ENCODE measurements at regions of chr15 and their contacts with region 1.

Region 1: DNA sequence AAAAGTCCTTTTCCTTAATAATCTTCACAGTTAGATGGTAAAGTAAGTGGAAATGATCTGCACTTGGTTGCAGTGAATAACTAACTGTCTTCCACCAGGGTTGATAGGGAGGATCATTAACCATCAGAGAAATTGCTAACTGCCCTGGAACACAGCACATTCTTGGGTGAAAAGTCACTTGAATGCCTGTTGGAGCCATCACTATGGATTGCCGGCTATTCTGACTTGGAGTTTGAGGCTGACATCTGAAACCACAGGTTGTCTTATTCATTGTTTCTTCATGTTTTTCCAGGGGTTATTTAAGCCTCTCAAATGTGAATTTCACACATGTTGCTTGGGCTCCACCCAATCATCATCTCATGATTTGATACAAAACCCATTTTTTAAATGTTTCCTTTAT is 901.4 kb downstream of the MCTP2 start:
- DNase-seq: peak; percentile 82
- H3K4me3 ChIP-seq: no peak overlapping the region
- H3K27ac ChIP-seq: no peak overlapping the region
- H3K4me1 ChIP-seq: peaks cover 10% of the 10 kb centered on the region
- H3K27me3 ChIP-seq: no peaks in the 10 kb centered on the region
- CTCF ChIP-seq: no peak

Region 2: DNA sequence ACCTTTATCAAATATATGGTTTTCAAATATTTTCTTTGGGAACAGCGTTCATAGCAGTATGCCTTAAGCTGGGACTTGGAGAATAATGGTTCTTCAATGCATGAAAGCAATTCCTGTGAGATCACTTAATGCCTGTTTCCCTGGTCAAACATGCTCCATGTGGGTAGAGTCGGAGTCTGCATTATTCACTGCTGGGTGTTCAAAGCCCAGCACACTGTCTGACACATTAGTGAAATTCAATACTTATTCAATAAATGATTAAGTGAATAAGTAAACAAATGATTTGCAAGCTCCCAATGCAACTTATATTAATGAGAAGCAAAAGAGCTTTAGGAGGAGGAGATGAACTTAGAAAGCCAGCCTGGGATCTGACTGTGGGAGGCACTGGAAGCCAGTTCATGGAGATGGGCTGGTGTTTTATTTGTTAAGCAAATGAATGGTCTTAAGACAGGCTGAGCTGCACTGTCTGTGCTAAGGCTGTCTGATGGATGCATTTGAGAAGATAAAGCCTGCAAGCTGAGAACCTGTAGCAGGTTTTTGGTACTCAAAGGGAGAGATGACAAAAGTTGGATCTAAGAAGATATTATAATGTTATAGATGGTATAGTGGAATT is 410.6 kb before region 1 on chr15:
- CTCF ChIA-PET with region 1: no interaction called
- dilution Hi-C with region 1: no loop called
- in situ Hi-C with region 1: no loop called
- intact Hi-C with region 1: no loop called
- DNase-seq: no peak
- H3K4me3 ChIP-seq: no peak overlapping the region
- H3K27ac ChIP-seq: no peak overlapping the region
- H3K4me1 ChIP-seq: peaks cover 5% of the 10 kb centered on the region
- H3K27me3 ChIP-seq: no peaks in the 10 kb centered on the region
- CTCF ChIP-seq: no peak

Region 3: GRCh38 chr15:95068701-95069521 is 63.9 kb before region 1 on chr15:
- CTCF ChIA-PET with region 1: no interaction called
- dilution Hi-C with region 1: loop called (anchors 5 kb)
- in situ Hi-C with region 1: no loop called
- intact Hi-C with region 1: no loop called
- DNase-seq: no peak
- H3K4me3 ChIP-seq: no peak overlapping the region
- H3K27ac ChIP-seq: no peak overlapping the region
- H3K4me1 ChIP-seq: no peaks in the 10 kb centered on the region
- H3K27me3 ChIP-seq: no peaks in the 10 kb centered on the region
- CTCF ChIP-seq: no peak